Activated T-helper 2 cell treated with anti-CD3 and anti-CD28 coated beads, Interferon-gamma antibody, Interleukin-2, Interleukin-4, amounts not matched to agents 10 μg/mL and 5 μg/mL and 100 μg/mL, durations not matched to agents 14 hours and 24 hours and 36 hours (primary cell): ENCODE measurements at regions of chr18 and their contacts with region 1.

Region 1: GRCh38 chr18:77067291-77068061 is 65.1 kb downstream of the MBP start:
- DNase-seq: peak; percentile 68
- H3K4me3 Mint-ChIP-seq: peak overlapping the region; percentile 63
- H3K27ac Mint-ChIP-seq: peak overlapping the region; percentile 94
- H3K4me1 Mint-ChIP-seq: peaks cover 97% of the 10 kb centered on the region
- H3K27me3 Mint-ChIP-seq: no peaks in the 10 kb centered on the region

Region 2: GRCh38 chr18:76416911-76417310 is 650.6 kb before region 1 on chr18:
- intact Hi-C with region 1: no loop called
- DNase-seq: no peak
- H3K4me3 Mint-ChIP-seq: no peak overlapping the region
- H3K27ac Mint-ChIP-seq: no peak overlapping the region
- H3K4me1 Mint-ChIP-seq: no peaks in the 10 kb centered on the region
- H3K27me3 Mint-ChIP-seq: peaks cover 8% of the 10 kb centered on the region

Region 3: DNA sequence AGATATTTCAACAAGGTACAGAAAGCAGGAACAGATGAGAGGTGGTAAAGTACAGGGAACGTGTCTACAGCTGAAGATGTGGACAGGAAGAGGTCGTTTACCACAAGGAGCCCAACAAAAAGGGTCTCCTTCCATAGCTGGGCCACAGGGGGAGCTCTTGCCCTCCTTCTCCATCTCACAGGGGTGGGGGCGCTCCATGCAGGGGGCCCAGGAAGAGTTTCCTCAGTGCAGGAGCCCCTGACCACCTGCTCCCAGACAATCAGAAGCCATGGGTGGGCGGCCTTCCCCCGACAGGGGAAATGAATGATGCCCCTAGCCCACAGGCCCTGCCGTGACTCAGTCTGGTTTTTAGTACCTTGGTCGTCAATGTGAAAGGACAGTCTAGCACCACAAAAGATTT is 408.8 kb before region 1 on chr18:
- intact Hi-C with region 1: loop called (anchors 10 kb)
- DNase-seq: no peak
- H3K4me3 Mint-ChIP-seq: no peak overlapping the region
- H3K27ac Mint-ChIP-seq: no peak overlapping the region
- H3K4me1 Mint-ChIP-seq: peaks cover 21% of the 10 kb centered on the region
- H3K27me3 Mint-ChIP-seq: peaks cover 53% of the 10 kb centered on the region

Region 4: DNA sequence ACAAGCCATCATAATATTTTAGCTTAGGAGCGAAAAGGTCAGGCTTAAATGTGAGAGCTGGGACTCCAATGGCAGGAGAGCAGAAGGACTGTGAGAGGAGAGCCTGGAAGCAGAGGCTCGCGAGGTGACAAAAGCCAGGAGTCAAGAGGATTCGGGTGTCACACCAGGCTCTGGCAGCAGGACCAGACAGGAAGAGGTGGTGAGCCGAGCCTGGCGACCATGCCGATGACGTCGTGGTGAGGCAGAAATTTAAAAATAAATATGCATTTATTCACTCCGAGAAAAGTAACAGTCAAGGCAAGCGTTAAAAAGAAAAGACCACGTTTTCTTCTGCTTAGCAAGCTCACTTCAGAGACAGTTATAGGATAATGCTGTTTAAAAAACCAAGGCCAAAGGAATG is 276.4 kb before region 1 on chr18:
- intact Hi-C with region 1: no loop called
- DNase-seq: no peak
- H3K4me3 Mint-ChIP-seq: no peak overlapping the region
- H3K27ac Mint-ChIP-seq: no peak overlapping the region
- H3K4me1 Mint-ChIP-seq: peaks cover 3% of the 10 kb centered on the region
- H3K27me3 Mint-ChIP-seq: peaks cover 16% of the 10 kb centered on the region

Region 5: DNA sequence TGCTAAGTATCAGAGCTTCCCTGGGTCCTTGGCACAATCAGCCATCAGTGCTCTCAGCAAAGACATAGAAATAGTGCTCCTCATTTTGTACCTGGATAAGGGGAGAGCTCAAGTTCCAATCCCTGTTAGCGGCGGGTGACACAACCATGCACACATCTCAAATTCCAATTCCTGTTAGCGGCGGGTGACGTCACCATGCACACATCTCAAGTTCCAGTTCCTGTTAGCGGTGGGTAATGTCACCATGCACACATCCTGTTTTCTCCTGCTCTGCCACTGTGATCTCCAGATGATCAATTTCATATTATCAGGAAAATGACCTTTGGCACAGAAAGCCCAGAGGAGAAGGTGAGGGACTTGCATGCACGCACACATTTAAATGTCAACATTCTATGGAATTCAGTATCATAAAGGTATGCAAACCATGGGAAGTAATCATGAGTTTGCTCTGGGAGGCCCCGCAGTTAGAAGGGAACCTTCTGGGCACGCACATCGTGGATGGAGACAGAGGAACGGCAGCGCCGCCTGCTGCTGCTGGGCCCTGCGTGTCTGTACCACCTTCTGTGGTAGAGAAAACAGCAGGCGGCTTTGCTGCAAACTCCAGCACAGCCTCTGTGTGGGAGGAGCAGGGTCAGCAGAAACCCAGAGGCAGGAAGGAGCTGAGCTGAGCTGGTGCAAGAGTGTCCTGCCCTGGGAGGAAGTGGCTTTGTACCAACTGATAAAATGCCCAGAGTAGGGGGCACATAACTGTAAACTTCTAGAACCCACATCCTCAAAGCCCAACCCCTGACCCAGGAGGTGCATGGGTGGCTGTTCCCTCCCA is 12.7 kb before region 1 on chr18:
- intact Hi-C with region 1: loop called (anchors 1 kb)
- DNase-seq: peak; percentile 80
- H3K4me3 Mint-ChIP-seq: peak overlapping the region; percentile 83
- H3K27ac Mint-ChIP-seq: peak overlapping the region; percentile 96
- H3K4me1 Mint-ChIP-seq: peaks cover 62% of the 10 kb centered on the region
- H3K27me3 Mint-ChIP-seq: no peaks in the 10 kb centered on the region

Region 6: DNA sequence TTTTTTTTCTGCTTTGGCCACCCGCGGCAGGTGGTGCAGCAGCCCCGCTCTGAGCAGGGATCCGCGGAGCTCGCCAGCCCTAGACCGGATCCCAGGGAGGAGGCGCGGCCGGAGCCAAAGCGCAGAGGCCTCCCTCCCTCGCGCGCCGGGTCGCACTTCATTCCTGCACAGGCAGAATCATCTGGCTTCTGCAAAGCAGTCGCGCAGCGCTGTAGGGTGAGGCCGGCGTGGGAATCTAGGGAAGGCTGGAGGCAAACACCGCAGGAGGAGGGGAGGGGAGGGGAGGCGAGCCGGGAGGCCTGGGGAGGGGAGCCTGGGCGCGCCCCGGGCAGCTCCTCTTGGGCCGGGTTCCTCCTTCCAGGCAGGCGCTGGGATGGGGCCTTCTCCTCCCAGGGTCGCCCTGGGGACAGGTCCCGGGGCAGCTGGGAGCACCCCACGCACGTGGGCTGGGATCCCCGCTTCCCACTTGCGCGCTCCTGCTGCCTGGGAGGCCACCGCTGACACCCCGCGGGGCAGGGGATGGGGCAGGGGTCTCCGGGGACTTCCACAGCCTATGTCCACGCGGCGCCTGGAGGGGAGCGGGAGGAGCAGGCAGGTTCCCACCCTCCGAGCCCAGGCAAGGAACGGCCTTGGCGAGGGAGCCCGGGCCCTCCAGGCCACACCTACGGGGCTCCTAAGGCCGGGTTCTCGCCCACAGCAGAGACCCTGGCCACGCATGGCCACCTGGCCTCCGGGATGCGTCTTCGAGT is 20.1 kb after region 1 on chr18:
- intact Hi-C with region 1: loop called (anchors 2 kb)
- DNase-seq: no peak
- H3K4me3 Mint-ChIP-seq: no peak overlapping the region
- H3K27ac Mint-ChIP-seq: no peak overlapping the region
- H3K4me1 Mint-ChIP-seq: peaks cover 45% of the 10 kb centered on the region
- H3K27me3 Mint-ChIP-seq: no peaks in the 10 kb centered on the region

Region 7: GRCh38 chr18:77177009-77177408 is 109.5 kb after region 1 on chr18:
- intact Hi-C with region 1: no loop called
- DNase-seq: no peak
- H3K4me3 Mint-ChIP-seq: no peak overlapping the region
- H3K27ac Mint-ChIP-seq: no peak overlapping the region
- H3K4me1 Mint-ChIP-seq: no peaks in the 10 kb centered on the region
- H3K27me3 Mint-ChIP-seq: no peaks in the 10 kb centered on the region

Region 8: DNA sequence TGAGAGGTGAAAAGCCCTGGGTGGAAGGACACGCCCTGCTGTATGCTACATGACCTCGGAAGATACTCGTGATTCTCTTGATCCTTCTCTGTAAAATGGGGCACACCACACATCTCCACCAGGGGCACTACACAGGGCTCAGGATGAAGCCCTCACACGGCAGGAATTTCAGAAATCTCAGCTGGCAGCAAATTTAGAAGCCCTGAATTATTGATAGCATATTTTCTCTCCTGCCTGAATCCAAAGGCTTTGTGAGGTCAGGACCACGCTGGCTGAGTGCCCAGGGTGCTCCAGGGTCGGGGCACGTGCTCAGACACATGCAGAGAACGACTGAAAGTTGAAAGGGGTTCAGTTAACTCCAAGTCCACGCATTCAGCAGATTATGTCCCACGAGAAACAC is 140.1 kb after region 1 on chr18:
- intact Hi-C with region 1: loop called (anchors 5 kb)
- DNase-seq: no peak
- H3K4me3 Mint-ChIP-seq: peak overlapping the region; percentile 39
- H3K27ac Mint-ChIP-seq: peak overlapping the region; percentile 42
- H3K4me1 Mint-ChIP-seq: peaks cover 39% of the 10 kb centered on the region
- H3K27me3 Mint-ChIP-seq: no peaks in the 10 kb centered on the region